ENCODE measurements at regions of chr3 and their contacts with region 1.

Region 1: GRCh38 chr3:49133226-49133951 is 539 bp upstream of the LAMB2 start:
- DNase-seq: peak; percentile 91
- ATAC-seq: peak; percentile 89

Region 2: DNA sequence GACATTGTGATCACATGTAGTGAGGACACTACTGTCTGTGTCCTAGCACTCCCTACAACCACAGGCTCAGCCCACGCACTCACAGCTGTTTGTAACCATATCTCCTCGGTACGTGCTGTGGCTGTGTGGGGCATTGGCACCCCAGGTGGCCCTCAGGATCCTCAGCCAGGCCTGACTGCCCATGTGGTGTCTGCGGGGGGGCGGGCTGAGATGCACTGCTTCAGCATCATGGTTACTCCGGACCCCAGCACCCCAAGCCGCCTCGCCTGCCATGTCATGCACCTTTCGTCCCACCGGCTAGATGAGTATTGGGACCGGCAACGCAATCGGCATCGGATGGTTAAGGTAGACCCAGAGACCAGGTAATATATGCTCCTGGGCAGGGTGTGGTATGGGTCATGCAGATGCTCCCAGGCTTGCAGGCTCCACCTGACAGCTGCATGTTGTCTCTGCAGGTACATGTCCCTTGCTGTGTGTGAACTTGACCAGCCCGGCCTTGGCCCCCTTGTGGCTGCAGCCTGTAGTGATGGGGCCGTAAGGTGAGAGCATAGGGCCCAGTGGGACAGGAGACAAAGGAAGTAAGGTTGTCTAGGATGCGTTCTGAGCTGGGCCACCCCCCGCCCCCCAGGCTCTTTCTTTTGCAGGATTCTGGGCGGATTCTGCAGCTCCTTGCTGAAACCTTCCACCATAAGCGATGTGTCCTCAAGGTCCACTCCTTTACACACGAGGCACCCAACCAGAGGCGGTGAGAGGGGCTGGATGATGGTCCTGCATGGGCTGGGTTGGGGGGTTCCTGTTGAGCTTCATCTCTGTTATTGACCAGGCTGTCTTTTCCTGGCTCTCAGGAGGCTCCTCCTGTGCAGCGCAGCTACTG is 119.4 kb before region 1 on chr3:
- intact Hi-C with region 1: no loop called
- DNase-seq: peak; percentile 58
- ATAC-seq: no peak

Region 3: GRCh38 chr3:49093853-49094767 is 39.3 kb before region 1 on chr3 and contains the start of gene QRICH1:
- intact Hi-C with region 1: loop called (anchors 2 kb)
- DNase-seq: peak; percentile 98
- ATAC-seq: peak; percentile 94
- total RNA-seq, gene QRICH1: 52.9 TPM

Region 4: DNA sequence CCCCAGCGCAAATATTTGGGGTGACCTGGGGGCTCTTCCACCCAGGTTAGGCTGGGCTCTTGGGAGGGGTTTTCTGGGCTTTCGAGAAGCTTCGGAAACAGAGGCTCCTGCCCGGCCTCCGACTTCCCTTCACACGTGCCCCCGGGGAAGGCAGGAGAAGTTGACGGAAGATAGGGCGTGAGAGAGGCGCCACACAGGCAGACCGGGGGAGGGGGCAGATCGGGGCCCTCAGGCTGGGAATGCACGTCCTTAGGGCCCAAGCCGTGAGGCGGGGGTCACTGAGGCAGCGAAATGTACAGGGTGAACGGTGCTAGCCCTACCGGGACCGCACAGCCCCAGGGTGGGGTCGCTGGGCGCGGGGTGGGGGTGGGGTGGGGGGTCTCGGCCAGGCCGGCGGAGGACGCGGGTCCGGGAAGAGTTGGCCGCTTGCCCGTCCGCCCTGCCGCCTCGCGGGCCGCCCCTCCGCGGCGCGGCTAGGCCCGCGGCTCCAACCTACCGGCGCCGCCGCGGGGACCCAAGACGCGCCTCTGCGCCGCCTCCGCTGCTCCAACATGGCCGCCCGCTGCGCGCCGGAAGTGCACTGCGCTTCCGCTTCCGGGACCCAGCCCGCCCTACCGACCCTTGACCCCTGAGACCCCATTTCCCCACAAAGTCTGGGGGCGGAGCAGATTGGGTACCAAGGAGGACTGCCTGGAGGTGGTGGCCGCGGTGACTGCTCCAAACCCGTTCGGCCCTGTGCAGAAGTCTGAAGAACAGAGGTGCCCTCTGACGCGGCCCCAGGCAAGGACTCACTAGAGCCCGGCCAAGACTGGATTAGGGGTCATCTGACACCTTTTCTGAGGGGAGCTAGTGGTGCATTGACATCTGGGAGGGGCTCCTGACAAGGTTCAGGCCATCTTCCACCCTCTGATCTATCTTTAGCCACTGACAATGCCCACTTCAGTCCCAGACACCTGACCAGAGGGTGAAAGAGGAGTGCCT is 32.7 kb after region 1 on chr3 and contains the start of gene CCDC71:
- intact Hi-C with region 1: loop called (anchors 2 kb)
- DNase-seq: peak; percentile 91
- ATAC-seq: peak; percentile 72
- total RNA-seq, gene CCDC71: 9.4 TPM

Region 5: DNA sequence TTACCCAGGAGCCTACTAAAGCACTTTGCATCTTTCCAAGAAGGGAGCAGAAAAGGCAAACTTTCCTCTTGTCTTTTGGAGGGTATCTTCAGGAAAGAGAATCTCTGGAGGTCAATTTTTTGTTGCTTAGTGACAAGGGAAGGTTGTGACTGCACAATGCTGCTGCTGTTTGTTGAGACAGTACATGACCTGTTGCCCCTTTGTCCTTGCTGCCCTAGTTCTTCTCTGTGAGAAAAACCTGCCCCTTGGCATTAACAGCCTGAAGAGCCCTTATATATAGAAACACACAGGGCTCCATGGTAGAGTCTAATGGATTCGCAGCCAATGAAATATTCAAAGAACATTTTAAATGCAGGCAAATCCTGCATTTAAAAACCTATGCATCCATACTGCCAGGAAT is 58.4 kb after region 1 on chr3:
- intact Hi-C with region 1: no loop called
- DNase-seq: no peak
- ATAC-seq: no peak

Region 6: DNA sequence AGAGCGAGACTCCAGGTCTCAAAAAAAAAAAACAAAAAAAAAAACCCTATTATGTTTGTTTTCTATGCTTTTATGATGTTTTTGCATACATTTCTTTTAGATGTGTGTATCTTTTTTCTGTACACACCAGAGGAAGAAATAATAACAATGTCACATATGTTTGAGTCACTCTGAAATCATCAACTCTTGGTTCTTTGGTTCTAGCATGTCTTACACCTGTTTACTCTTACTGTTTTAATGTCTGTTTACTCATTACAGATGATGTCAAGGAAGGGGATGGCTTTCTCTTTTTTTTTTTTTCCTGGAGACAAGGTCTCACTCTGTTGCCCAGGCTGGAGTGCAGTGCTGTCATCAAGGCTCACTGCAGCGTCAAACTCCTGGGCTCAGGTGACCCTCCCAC is 254.3 kb after region 1 on chr3:
- intact Hi-C with region 1: no loop called
- DNase-seq: no peak
- ATAC-seq: no peak

Region 7: GRCh38 chr3:49523756-49524747 is 390.7 kb after region 1 on chr3:
- intact Hi-C with region 1: no loop called
- DNase-seq: no peak
- ATAC-seq: no peak

Measured in Right ventricle myocardium inferior (tissue), 1 donor.